HepG2 (cell line): ENCODE measurements at regions of chr18 and their contacts with region 1.

Region 1: GRCh38 chr18:46660955-46661749 is 4.1 kb upstream of the LOXHD1 start:
- DNase-seq: peak; percentile 4
- ATAC-seq: peak; percentile 13; the same call in 2 of the 3 replicates
- H3K4me3 ChIP-seq: no peak overlapping the region
- H3K27ac ChIP-seq: no peak overlapping the region
- H3K4me1 ChIP-seq: no peaks in the 10 kb centered on the region
- H3K27me3 ChIP-seq: no peaks in the 10 kb centered on the region
- CTCF ChIP-seq: no peak
- EP300 ChIP-seq: no peak
- POLR2A ChIP-seq: no peak
- RAD21 ChIP-seq: no peak

Region 2: GRCh38 chr18:46148810-46149209 is 512.3 kb before region 1 on chr18:
- CTCF ChIA-PET with region 1: interaction called, 7 read pairs
- POLR2A ChIA-PET with region 1: no interaction called
- in situ Hi-C with region 1: loop called (anchors 10 kb)
- intact Hi-C with region 1: loop called (anchors 1 kb)
- DNase-seq: peak; percentile 59
- ATAC-seq: peak; percentile 81
- H3K4me3 ChIP-seq: no peak overlapping the region
- H3K27ac ChIP-seq: no peak overlapping the region
- H3K4me1 ChIP-seq: peaks cover 20% of the 10 kb centered on the region
- H3K27me3 ChIP-seq: no peaks in the 10 kb centered on the region; a peak in 2 of 5 replicates
- CTCF ChIP-seq: peak; percentile 77
- EP300 ChIP-seq: no peak
- POLR2A ChIP-seq: no peak
- RAD21 ChIP-seq: 0 out of 2 replicates have a peak, but pooled peaks have one; percentile 24

Region 3: DNA sequence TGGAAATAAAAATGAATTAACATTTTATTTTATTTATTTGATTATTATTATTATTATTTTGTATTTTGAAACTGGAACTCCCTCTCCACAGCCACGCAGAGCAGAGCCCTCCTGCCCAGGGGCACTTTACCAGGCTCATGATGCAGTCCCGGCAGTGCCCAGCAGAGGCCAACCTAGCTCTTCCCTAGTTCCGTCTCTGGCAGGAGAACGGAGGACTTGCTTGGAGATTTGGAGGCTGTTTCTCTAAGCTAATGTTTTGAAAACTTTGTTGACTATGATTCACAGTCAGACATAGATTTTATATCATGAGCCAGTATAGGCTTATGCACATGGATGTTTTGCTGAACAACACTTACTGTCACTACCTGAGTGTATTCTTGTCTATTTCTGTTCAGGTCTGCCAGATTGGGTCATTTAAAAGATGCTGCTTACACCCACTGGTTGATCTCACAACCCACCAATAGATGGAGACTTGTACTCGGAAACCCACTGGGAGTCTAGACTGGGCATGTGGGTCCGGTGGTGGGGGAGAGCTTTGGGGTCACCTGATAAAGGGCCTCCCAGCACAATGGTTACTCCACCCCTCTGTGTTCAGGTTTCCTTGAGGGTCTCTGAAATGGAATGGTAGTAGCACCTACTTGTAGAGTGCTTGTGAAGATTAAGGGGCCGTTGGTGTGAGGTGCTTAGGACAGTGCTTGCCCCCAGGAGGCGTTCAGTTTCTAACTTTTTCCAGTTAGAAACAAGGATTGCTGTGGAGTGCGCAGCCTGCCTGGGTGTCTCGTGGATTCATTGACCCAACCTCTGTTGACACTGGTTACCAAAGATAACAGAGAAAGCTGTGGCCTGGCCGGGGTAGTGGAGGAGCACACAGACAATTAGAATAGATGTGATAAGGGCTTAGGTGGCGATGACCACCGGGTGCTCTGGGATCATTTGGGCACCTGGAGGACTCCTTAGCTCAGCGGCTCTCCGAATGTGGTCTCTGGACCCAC is 379.7 kb before region 1 on chr18:
- CTCF ChIA-PET with region 1: interaction called, 10 read pairs
- POLR2A ChIA-PET with region 1: no interaction called
- in situ Hi-C with region 1: loop called (anchors 5 kb)
- intact Hi-C with region 1: loop called (anchors 1 kb)
- DNase-seq: peak; percentile 44
- ATAC-seq: peak; percentile 90
- H3K4me3 ChIP-seq: no peak overlapping the region
- H3K27ac ChIP-seq: no peak overlapping the region
- H3K4me1 ChIP-seq: no peaks in the 10 kb centered on the region; the same call in 1 of the 2 replicates
- H3K27me3 ChIP-seq: 0 out of 5 replicates have a peak, but pooled peaks cover 0 to 6% of the 10 kb centered on the region in 2 experiments
- CTCF ChIP-seq: peak; percentile 80
- EP300 ChIP-seq: no peak
- POLR2A ChIP-seq: no peak
- RAD21 ChIP-seq: peak; percentile 75

Region 4: DNA sequence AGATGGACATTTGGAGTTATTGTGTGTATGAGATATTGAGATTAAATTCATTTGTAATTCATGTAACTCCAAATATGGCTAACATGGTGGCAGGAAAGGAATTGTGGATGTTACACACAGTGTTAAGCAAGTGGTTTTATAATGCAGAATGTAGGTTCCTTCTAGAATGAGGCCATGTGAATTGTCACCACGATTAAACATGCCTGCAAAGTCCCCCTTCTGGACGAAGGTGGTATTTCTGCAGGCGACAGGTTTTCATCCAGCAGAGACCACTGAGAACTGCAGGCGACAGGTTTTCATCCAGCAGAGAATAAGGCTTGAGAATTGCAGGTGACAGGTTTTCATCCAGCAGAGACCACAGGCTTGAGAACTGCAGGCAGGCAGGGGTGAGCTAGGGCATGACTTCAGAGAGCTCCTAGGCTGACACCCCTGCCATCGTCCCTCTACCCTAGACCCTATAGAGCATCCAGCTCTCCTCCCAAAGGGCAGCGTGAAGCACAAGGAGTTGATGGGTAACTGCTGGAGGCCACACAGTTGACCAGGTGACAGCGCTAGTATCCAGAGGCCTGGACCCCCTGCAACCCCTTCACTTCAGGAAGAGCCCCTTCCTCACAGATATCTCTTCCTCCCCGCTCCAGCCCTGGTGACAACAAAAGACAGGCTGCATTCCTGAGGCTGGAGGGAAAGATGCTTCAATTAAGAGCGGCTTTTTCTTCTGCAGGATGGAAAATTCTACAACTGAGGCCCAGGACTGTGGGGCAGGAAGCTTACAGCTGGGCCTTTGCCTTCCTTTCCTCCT is 179.9 kb before region 1 on chr18:
- CTCF ChIA-PET with region 1: no interaction called
- POLR2A ChIA-PET with region 1: no interaction called
- in situ Hi-C with region 1: no loop called
- intact Hi-C with region 1: loop called (anchors 1 kb)
- DNase-seq: peak; percentile 28
- ATAC-seq: peak; percentile 84
- H3K4me3 ChIP-seq: no peak overlapping the region
- H3K27ac ChIP-seq: no peak overlapping the region
- H3K4me1 ChIP-seq: no peaks in the 10 kb centered on the region
- H3K27me3 ChIP-seq: peaks cover 0 to 18% of the 10 kb centered on the region in 2 experiments; a peak in 2 of 5 replicates
- CTCF ChIP-seq: peak; percentile 61
- EP300 ChIP-seq: no peak
- POLR2A ChIP-seq: no peak
- RAD21 ChIP-seq: no peak

Region 5: GRCh38 chr18:46555724-46556123 is 105.4 kb before region 1 on chr18:
- CTCF ChIA-PET with region 1: interaction called, 25 read pairs
- POLR2A ChIA-PET with region 1: no interaction called
- in situ Hi-C with region 1: loop called (anchors 5 kb)
- intact Hi-C with region 1: loop called (anchors 1 kb)
- DNase-seq: peak; percentile 38
- ATAC-seq: peak; percentile 97
- H3K4me3 ChIP-seq: no peak overlapping the region
- H3K27ac ChIP-seq: no peak overlapping the region
- H3K4me1 ChIP-seq: no peaks in the 10 kb centered on the region
- H3K27me3 ChIP-seq: peaks cover 2 to 8% of the 10 kb centered on the region in 2 experiments; a peak in 3 of 5 replicates
- CTCF ChIP-seq: peak; percentile 69
- EP300 ChIP-seq: no peak
- POLR2A ChIP-seq: no peak
- RAD21 ChIP-seq: peak; percentile 42; the same call in 1 of the 2 replicates

Region 6: DNA sequence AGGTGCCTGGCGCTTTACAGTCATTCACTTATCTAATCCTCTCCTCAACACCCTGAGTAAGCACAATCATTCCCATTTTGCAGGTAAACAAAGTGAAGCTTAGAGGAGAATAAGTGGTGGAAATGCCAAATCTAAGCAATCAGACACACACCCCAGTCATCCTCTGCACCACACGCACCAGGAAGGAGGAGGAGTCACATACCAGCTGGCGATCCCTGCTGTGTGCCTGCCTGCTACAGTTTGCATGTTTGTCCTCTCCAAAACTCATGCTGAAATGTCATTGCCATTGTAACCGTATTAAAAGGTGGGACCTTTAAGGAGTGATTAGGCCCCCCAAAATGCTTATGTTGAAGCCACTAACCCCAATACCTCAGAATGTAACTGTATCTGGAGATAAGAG is 97.8 kb before region 1 on chr18:
- CTCF ChIA-PET with region 1: no interaction called
- POLR2A ChIA-PET with region 1: no interaction called
- in situ Hi-C with region 1: loop called (anchors 5 kb)
- intact Hi-C with region 1: no loop called
- DNase-seq: no peak
- ATAC-seq: no peak
- H3K4me3 ChIP-seq: no peak overlapping the region
- H3K27ac ChIP-seq: no peak overlapping the region
- H3K4me1 ChIP-seq: no peaks in the 10 kb centered on the region
- H3K27me3 ChIP-seq: peaks cover 2 to 22% of the 10 kb centered on the region in 2 experiments; a peak in 3 of 5 replicates
- CTCF ChIP-seq: no peak
- EP300 ChIP-seq: no peak
- POLR2A ChIP-seq: no peak
- RAD21 ChIP-seq: no peak